Psoas muscle (tissue), 8 donors: ENCODE measurements at regions of chr14 and their contacts with region 1.

Region 1: GRCh38 chr14:96275177-96276112 is 19.4 kb downstream of the BDKRB1 start:
- DNase-seq: peak; percentile 75 to 80
- ATAC-seq: peak; percentile 52 to 73 (median 66)
- H3K4me3 ChIP-seq: no peak overlapping the region
- H3K27ac ChIP-seq: no peak overlapping the region
- H3K4me1 ChIP-seq: peaks cover 5% of the 10 kb centered on the region
- H3K27me3 ChIP-seq: no peaks in the 10 kb centered on the region
- CTCF ChIP-seq: peak; percentile 82

Region 2: GRCh38 chr14:96001866-96002497 is 273.5 kb before region 1 on chr14:
- intact Hi-C with region 1: loop called in 1 of 2 experiments (anchors 10 kb)
- DNase-seq: no peak
- ATAC-seq: no peak
- H3K4me3 ChIP-seq: no peak overlapping the region
- H3K27ac ChIP-seq: no peak overlapping the region
- H3K4me1 ChIP-seq: no peaks in the 10 kb centered on the region
- H3K27me3 ChIP-seq: peaks cover 0 to 26% (median 0%) of the 10 kb centered on the region in 3 donors
- CTCF ChIP-seq: no peak

Region 3: DNA sequence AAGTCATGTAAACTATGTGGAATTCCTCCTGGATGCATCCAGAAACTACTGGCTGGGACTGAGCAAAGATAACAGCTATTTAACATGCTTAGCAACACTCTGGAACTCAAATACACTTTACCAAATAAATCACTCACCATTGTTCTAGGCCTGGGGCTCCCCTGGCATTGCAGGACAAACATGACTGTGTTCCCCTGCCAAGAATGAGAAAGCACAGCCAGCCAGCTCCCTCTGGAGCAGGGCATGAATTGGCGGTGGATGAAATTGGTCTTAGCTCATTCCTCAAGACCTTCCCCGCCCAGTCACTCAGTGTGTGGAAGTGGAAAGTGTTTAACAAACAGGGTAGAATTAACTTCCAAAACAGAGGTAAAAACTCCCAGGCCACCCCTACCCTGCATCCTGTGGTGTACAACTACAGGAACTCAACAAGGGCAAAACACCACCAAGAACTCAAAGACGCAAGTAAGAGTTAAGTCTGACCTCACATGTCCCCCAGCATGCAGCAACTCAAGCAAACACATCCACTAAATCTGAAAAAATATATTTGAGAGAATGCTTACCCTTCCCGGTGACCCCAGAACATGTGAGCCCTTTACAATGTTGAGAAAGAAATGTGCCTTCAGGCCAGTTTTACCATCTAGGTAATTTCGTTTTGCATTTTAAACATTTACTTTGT is 129.2 kb before region 1 on chr14:
- intact Hi-C with region 1: no loop called
- DNase-seq: no peak
- ATAC-seq: peak in 1 of 4 donors; percentile 30
- H3K4me3 ChIP-seq: no peak overlapping the region
- H3K27ac ChIP-seq: no peak overlapping the region
- H3K4me1 ChIP-seq: no peaks in the 10 kb centered on the region
- H3K27me3 ChIP-seq: peaks cover 0 to under 1% (median 0%) of the 10 kb centered on the region in 3 donors
- CTCF ChIP-seq: no peak

Region 4: GRCh38 chr14:97290977-97291376 is 1015.5 kb after region 1 on chr14:
- intact Hi-C with region 1: no loop called
- DNase-seq: no peak
- ATAC-seq: no peak
- H3K4me3 ChIP-seq: no peak overlapping the region
- H3K27ac ChIP-seq: no peak overlapping the region
- H3K4me1 ChIP-seq: no peaks in the 10 kb centered on the region
- H3K27me3 ChIP-seq: peaks cover 0 to 2% (median 0%) of the 10 kb centered on the region in 3 donors
- CTCF ChIP-seq: no peak